Sigmoid colon (tissue), 7 donors: ENCODE measurements at regions of chr4 and their contacts with region 1.

Region 1: GRCh38 chr4:8428293-8429097 is 12.0 kb downstream of the ACOX3 start:
- DNase-seq: peak; percentile 94
- H3K4me3 ChIP-seq: peak overlapping the region; percentile 77 to 98 (median 94)
- H3K27ac ChIP-seq: peak overlapping the region; percentile 86 to 95 (median 92)
- H3K4me1 ChIP-seq: peaks cover 0 to 44% (median 34%) of the 10 kb centered on the region in 4 donors
- H3K27me3 ChIP-seq: no peaks in the 10 kb centered on the region
- CTCF ChIP-seq: peak in 1 of 4 experiments; percentile 12
- EP300 ChIP-seq: peak in 2 of 4 donors; percentile 42 to 72
- POLR2A ChIP-seq: peak; percentile 54 to 63

Region 2: GRCh38 chr4:8158710-8159536 is 269.6 kb before region 1 on chr4 and contains the start of gene ABLIM2:
- intact Hi-C with region 1: loop called (anchors 5 kb)
- DNase-seq: peak; percentile 99
- H3K4me3 ChIP-seq: peak within 1 kb of the TSS; percentile 68 to 98 (median 84)
- H3K27ac ChIP-seq: peak within 1 kb of the TSS; percentile 66 to 81 (median 76)
- H3K4me1 ChIP-seq: peaks cover 0 to 25% (median 23%) of the 10 kb centered on the region in 4 donors
- H3K27me3 ChIP-seq: peaks cover 7 to 12% (median 11%) of the 10 kb centered on the region in 3 donors
- CTCF ChIP-seq: no peak
- EP300 ChIP-seq: no peak
- POLR2A ChIP-seq: peak; percentile 52 to 55
- total RNA-seq, gene ABLIM2: 3.1 to 8.9 (median 5.6) TPM

Region 3: DNA sequence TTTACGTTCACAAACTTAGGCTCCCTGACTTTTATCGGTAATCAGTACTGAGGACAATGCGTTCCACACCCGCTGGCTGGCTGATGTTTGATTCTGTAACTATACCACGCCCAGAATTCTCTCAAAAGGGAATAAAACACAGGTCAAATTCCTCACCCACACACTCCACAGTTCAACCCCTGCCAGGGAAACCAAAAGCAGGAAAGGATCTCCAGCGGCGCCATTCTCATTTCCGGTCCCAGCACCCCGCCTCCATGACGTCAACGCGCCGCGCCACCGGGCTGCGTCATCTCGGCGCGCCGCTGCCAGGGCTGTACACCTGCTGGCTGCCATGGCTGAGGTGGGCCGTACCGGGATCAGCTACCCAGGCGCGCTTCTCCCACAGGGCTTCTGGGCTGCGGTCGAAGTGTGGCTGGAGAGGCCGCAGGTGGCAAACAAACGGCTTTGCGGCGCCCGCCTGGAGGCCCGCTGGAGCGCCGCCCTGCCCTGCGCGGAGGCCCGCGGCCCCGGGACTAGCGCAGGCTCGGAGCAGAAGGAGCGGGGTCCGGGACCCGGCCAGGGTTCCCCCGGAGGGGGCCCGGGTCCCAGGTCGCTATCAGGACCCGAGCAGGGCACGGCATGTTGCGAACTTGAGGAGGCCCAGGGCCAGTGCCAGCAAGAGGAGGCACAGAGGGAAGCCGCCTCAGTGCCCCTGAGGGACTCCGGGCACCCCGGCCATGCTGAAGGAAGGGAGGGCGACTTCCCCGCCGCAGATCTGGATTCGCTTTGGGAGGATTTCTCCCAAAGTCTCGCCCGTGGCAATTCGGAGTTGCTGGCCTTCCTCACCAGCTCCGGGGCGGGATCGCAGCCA is 12.2 kb after region 1 on chr4 and contains the starts of genes ACOX3 and TRMT44:
- intact Hi-C with region 1: loop called (anchors 1 kb)
- DNase-seq: peak; percentile 95
- H3K4me3 ChIP-seq: peak within 1 kb of the TSS; percentile 89 to 99 (median 96)
- H3K27ac ChIP-seq: peak within 1 kb of the TSS; percentile 90 to 93 (median 92)
- H3K4me1 ChIP-seq: peaks cover 0 to 73% (median 54%) of the 10 kb centered on the region in 4 donors
- H3K27me3 ChIP-seq: no peaks in the 10 kb centered on the region
- CTCF ChIP-seq: no peak
- EP300 ChIP-seq: peak in 3 of 4 donors; percentile 3 to 77 (median 7)
- POLR2A ChIP-seq: peak; percentile 38 to 72
- total RNA-seq, gene ACOX3: 24.8 to 51.0 (median 29.4) TPM
- total RNA-seq, gene TRMT44: 14.2 to 29.1 (median 17.0) TPM